Caki2 (cell line): ENCODE measurements at regions of chr6 and their contacts with region 1.

Region 1: GRCh38 chr6:137323860-137324259 is 104.7 kb upstream of the IFNGR1 start:
- DNase-seq: peak; percentile 8

Region 2: GRCh38 chr6:137277971-137278637 is 45.8 kb before region 1 on chr6:
- in situ Hi-C with region 1: loop called (anchors 5 kb)
- DNase-seq: peak; percentile 85